ENCODE measurements at regions of chr2 and their contacts with region 1.

Region 1: GRCh38 chr2:235734688-235735231 is 240.9 kb downstream of the AGAP1 start:
- DNase-seq: no peak
- ATAC-seq: no peak
- H3K4me3 ChIP-seq: no peak overlapping the region
- H3K27ac ChIP-seq: no peak overlapping the region
- H3K4me1 ChIP-seq: no peaks in the 10 kb centered on the region
- H3K27me3 ChIP-seq: no peaks in the 10 kb centered on the region
- CTCF ChIP-seq: no peak

Region 2: DNA sequence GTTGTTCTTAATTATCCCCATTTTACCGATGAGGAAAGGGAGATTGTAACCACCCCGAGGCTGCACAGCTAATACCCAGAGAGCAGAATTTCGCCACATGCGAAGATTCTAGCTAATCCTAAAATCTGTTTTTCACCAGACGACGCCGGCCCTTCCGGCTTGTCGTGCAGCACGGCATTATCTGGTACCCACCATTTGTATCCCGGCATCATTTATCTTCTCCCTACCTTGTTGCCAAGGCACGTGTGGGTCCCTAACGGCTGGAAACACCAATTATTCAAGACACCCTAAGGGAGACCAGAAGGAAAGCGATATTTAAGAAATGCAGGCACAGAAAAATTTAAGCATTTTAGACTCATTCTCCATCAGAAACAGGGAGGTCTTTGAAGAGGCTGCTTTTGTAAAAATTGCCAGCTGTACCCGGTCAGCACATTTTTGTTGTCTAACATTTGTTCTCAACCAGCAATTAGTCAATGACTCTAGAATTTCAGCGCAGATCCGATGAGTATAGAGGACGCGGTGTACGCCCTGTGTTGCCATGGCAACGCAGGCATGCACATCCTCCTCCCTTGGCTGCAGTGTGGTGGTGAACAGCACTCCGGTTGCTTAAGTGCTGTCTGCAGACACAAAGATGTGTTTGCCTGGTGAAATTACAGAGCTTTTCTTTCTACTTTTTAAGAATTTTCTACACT is 129.3 kb before region 1 on chr2:
- intact Hi-C with region 1: loop called (anchors 10 kb)
- DNase-seq: no peak
- ATAC-seq: peak; percentile 66
- H3K4me3 ChIP-seq: no peak overlapping the region
- H3K27ac ChIP-seq: no peak overlapping the region
- H3K4me1 ChIP-seq: peaks cover 6% of the 10 kb centered on the region
- H3K27me3 ChIP-seq: no peaks in the 10 kb centered on the region
- CTCF ChIP-seq: no peak

Measured in upper lobe of right lung (tissue), 1 donor.